ENCODE measurements at regions of chr3 and their contacts with region 1.

Region 1: GRCh38 chr3:115819785-115820384 is 196.6 kb downstream of the GAP43 start:
- DNase-seq: peak; percentile 82
- ATAC-seq: peak; percentile 92
- H3K4me3 Mint-ChIP-seq: no peak overlapping the region
- H3K27ac Mint-ChIP-seq: no peak overlapping the region
- H3K4me1 Mint-ChIP-seq: no peaks in the 10 kb centered on the region
- H3K27me3 Mint-ChIP-seq: no peaks in the 10 kb centered on the region
- CTCF ChIP-seq: peak; percentile 97

Region 2: DNA sequence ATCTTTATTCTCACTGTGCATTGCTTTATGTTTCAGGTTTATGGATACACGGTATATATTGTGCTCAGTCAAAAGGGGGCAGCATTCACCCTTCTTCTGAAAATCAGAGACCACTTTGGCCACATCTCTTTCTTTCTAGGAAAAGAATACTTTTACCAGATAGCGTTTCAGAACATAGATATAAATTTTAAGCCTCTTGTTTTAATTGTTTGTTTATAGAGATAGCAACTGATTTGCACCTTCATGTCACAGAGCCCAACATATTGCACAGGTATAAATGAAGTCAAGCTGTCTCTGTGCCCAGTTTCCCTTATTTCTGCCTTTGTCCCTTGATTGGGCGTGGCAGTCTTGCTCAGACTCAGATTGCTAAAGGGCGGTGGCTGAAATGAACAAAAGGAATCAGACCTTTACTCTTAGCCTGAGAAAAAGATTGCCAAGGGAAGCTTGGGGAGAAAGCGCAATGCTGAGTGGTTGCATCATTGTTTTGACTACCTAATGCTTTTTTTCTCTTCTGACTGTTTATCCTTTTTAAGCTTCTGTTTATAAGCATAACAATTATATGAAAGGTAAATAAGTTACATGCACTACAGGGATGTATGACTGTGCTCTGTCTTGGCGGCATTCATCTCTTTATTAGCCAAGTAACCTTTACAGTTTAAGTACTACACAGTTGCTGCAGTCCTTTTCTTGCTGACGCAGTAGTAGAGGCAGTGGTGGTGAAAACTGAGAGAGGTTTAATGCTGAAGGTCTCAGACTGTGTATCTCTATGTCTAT is 602.0 kb before region 1 on chr3:
- CTCF ChIA-PET with region 1: interaction called, 15 read pairs
- POLR2A ChIA-PET with region 1: no interaction called
- intact Hi-C with region 1: loop called (anchors 10 kb)
- DNase-seq: peak; percentile 18
- ATAC-seq: no peak
- H3K4me3 Mint-ChIP-seq: no peak overlapping the region
- H3K27ac Mint-ChIP-seq: no peak overlapping the region
- H3K4me1 Mint-ChIP-seq: no peaks in the 10 kb centered on the region
- H3K27me3 Mint-ChIP-seq: no peaks in the 10 kb centered on the region
- CTCF ChIP-seq: peak; percentile 63

Region 3: GRCh38 chr3:115633467-115633866 is 186.4 kb before region 1 on chr3:
- CTCF ChIA-PET with region 1: no interaction called
- POLR2A ChIA-PET with region 1: no interaction called
- intact Hi-C with region 1: no loop called
- DNase-seq: no peak
- ATAC-seq: no peak
- H3K4me3 Mint-ChIP-seq: no peak overlapping the region
- H3K27ac Mint-ChIP-seq: no peak overlapping the region
- H3K4me1 Mint-ChIP-seq: no peaks in the 10 kb centered on the region
- H3K27me3 Mint-ChIP-seq: peaks cover 18% of the 10 kb centered on the region
- CTCF ChIP-seq: no peak

Region 4: GRCh38 chr3:115692887-115693524 is 126.9 kb before region 1 on chr3:
- CTCF ChIA-PET with region 1: interaction called, 6 read pairs
- POLR2A ChIA-PET with region 1: no interaction called
- intact Hi-C with region 1: loop called (anchors 10 kb)
- DNase-seq: peak; percentile 80
- ATAC-seq: peak; percentile 95
- H3K4me3 Mint-ChIP-seq: no peak overlapping the region
- H3K27ac Mint-ChIP-seq: no peak overlapping the region
- H3K4me1 Mint-ChIP-seq: no peaks in the 10 kb centered on the region
- H3K27me3 Mint-ChIP-seq: peaks cover 3% of the 10 kb centered on the region
- CTCF ChIP-seq: peak; percentile 85

Region 5: GRCh38 chr3:115720983-115721382 is 98.9 kb before region 1 on chr3:
- CTCF ChIA-PET with region 1: no interaction called
- POLR2A ChIA-PET with region 1: no interaction called
- intact Hi-C with region 1: loop called (anchors 10 kb)
- DNase-seq: no peak
- ATAC-seq: no peak
- H3K4me3 Mint-ChIP-seq: no peak overlapping the region
- H3K27ac Mint-ChIP-seq: no peak overlapping the region
- H3K4me1 Mint-ChIP-seq: no peaks in the 10 kb centered on the region
- H3K27me3 Mint-ChIP-seq: peaks cover 14% of the 10 kb centered on the region
- CTCF ChIP-seq: no peak

Region 6: GRCh38 chr3:115836944-115837343 is 17.1 kb after region 1 on chr3:
- CTCF ChIA-PET with region 1: interaction called, 14 read pairs
- POLR2A ChIA-PET with region 1: no interaction called
- intact Hi-C with region 1: no loop called
- DNase-seq: no peak
- ATAC-seq: no peak
- H3K4me3 Mint-ChIP-seq: no peak overlapping the region
- H3K27ac Mint-ChIP-seq: no peak overlapping the region
- H3K4me1 Mint-ChIP-seq: no peaks in the 10 kb centered on the region
- H3K27me3 Mint-ChIP-seq: no peaks in the 10 kb centered on the region
- CTCF ChIP-seq: peak; percentile 56

Measured in activated CD8-positive, alpha-beta T cell treated with anti-CD3 and anti-CD28 coated beads for 36 hours (primary cell).